Activated CD4-positive, alpha-beta memory T cell treated with anti-CD3 and anti-CD28 coated beads for 36 hours (primary cell): ENCODE measurements at regions of chr18 and their contacts with region 1.

Region 1: DNA sequence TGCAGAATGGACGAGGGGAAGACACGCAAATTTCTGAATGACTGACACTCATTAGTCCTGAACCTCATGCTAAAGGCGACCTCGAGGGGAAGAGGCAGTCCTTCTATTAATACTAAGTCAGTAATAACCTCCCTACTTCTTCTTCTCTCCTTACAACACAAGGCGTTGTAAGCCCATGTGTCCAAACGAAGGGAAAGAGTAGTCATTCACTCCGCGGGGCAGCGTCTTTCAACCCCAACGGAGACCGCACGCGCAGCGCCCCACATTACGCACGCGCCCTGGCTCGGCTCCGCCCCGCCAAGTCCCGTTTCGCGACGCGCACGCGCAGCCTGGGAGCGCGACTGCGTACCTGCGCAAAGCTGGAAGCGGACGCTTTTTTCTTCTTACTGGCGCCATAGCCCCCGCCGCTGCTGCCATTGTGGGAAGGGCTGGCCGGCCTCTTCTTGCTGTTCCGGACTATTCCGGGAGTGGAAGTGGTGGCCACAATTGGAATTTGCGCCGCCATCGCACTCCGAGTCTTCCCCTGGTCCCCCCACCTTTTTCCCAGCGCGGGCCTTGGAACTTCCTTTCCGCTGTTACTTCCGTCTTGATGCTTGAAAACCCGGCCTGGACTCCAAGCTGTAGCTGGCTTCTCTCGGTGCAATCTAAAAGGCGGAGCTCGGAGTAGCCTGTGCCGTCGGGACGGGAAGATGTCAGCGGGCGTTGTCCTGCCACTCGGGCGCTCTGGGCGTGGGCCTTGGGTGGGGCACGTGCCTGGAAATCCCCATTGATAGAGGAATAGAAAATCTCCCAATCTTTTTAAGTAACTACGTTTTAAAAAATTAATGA is at the start of gene INO80C:
- DNase-seq: peak; percentile 95
- H3K4me3 Mint-ChIP-seq: peak within 1 kb of the TSS; percentile 95
- H3K27ac Mint-ChIP-seq: peak within 1 kb of the TSS; percentile 98
- H3K4me1 Mint-ChIP-seq: peaks cover 26% of the 10 kb centered on the region
- H3K27me3 Mint-ChIP-seq: no peaks in the 10 kb centered on the region
- total RNA-seq, gene INO80C: 25.3 to 28.5 TPM

Region 2: GRCh38 chr18:34976899-34977837 is 520.4 kb before region 1 on chr18:
- CTCF ChIA-PET with region 1: no interaction called
- POLR2A ChIA-PET with region 1: no interaction called
- intact Hi-C with region 1: loop called (anchors 5 kb)
- DNase-seq: peak; percentile 78
- H3K4me3 Mint-ChIP-seq: peak overlapping the region; percentile 72
- H3K27ac Mint-ChIP-seq: no peak overlapping the region
- H3K4me1 Mint-ChIP-seq: peaks cover 23% of the 10 kb centered on the region
- H3K27me3 Mint-ChIP-seq: peaks cover 30% of the 10 kb centered on the region

Region 3: GRCh38 chr18:35343936-35344735 is 153.4 kb before region 1 on chr18 and contains the start of gene ZNF24:
- CTCF ChIA-PET with region 1: no interaction called
- POLR2A ChIA-PET with region 1: interaction called, 3 read pairs
- intact Hi-C with region 1: loop called (anchors 1 kb)
- DNase-seq: peak; percentile 95
- H3K4me3 Mint-ChIP-seq: peak within 1 kb of the TSS; percentile 87
- H3K27ac Mint-ChIP-seq: peak within 1 kb of the TSS; percentile 96
- H3K4me1 Mint-ChIP-seq: peaks cover 45% of the 10 kb centered on the region
- H3K27me3 Mint-ChIP-seq: no peaks in the 10 kb centered on the region
- total RNA-seq, gene ZNF24: 40.6 to 48.6 TPM

Region 4: DNA sequence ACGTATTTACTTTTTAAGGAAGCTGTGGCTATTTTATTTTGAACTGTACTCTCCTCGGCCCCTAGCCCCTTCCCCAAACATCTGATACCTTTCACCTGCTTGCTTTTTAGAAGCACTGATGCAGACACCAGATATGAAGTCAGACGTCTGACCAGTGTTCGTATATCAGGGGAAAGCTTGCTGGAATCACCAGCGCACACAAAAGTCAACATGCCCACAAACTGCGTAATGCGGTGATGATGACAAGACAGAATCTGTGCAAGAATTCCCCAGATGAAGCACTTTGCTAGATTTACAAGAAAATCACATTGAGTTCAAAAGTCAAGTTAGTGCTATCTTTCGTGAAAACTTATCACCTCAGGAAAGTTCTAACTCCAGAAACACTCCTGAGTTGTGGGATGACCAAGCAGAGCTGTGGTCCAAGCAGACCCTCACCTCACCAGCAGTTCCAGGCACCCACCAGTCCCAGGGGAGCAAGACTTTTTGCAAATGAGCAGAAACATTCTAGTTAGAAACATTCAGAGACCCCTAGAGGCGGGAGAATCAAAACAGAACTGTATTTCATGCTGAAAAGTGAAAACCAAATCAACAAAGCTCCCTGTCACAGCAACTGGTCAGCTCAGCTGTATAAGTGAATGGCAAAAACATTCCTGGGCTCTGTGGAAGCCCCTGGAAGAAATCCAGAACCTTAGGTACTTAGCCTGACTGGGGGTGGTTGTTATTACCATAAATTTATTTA is 55.6 kb before region 1 on chr18:
- CTCF ChIA-PET with region 1: no interaction called
- POLR2A ChIA-PET with region 1: no interaction called
- intact Hi-C with region 1: no loop called
- DNase-seq: no peak
- H3K4me3 Mint-ChIP-seq: no peak overlapping the region
- H3K27ac Mint-ChIP-seq: no peak overlapping the region
- H3K4me1 Mint-ChIP-seq: no peaks in the 10 kb centered on the region
- H3K27me3 Mint-ChIP-seq: peaks cover 9% of the 10 kb centered on the region

Region 5: DNA sequence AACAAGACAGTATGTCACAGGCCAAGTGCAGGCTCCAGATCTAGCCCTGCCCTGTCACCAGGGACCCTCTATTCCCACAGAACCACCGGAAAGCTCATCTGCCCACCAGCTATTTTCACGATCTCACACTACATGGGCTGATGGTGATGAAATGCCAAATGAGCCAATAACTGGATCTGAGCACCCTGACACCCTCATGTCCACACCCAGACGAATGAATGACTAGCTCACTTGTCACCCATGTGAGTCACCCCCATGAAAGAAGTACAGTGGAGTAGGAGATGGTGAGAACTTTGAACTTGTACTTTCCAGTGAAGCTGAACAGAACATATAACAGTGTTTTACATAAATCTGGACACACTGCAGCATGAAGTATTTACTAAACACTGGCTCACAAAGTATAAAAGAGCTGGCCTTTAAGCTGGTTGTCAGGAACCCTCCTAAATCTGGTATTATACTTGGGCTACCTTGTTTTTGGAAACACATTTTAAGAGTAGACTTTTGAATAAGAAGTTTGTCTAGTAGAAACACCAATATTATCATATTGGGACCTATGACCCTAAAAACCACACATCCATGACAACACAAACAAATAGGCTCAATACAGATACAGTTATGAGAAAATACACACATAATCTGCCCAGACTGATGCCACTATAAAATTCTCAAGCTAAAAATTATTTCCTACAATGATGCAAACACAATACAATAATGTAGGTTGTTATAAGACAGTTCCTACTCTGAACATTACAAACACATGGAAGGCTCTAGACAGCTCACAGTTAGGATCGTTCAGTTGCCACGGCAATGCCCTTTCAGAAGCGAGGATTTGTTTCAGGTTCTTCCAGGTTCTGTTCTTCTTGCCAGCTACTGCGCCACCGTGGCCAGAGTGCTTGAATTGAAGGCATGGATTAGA is 18.8 kb before region 1 on chr18:
- CTCF ChIA-PET with region 1: interaction called, 11 read pairs
- POLR2A ChIA-PET with region 1: interaction called, 16 read pairs
- intact Hi-C with region 1: loop called (anchors 1 kb)
- DNase-seq: peak; percentile 65
- H3K4me3 Mint-ChIP-seq: peak overlapping the region; percentile 8
- H3K27ac Mint-ChIP-seq: peak overlapping the region; percentile 39
- H3K4me1 Mint-ChIP-seq: peaks cover 34% of the 10 kb centered on the region
- H3K27me3 Mint-ChIP-seq: no peaks in the 10 kb centered on the region

Region 6: GRCh38 chr18:35580701-35581539 is 83.3 kb after region 1 on chr18:
- CTCF ChIA-PET with region 1: no interaction called
- POLR2A ChIA-PET with region 1: interaction called, 5 read pairs
- intact Hi-C with region 1: loop called (anchors 1 kb)
- DNase-seq: peak; percentile 61
- H3K4me3 Mint-ChIP-seq: peak overlapping the region; percentile 68
- H3K27ac Mint-ChIP-seq: peak overlapping the region; percentile 53
- H3K4me1 Mint-ChIP-seq: peaks cover 34% of the 10 kb centered on the region
- H3K27me3 Mint-ChIP-seq: peaks cover 25% of the 10 kb centered on the region

Region 7: GRCh38 chr18:35972197-35973052 is 474.8 kb after region 1 on chr18 and contains the start of gene RMP24:
- CTCF ChIA-PET with region 1: no interaction called
- POLR2A ChIA-PET with region 1: interaction called, 5 read pairs
- intact Hi-C with region 1: loop called (anchors 1 kb)
- DNase-seq: peak; percentile 97
- H3K4me3 Mint-ChIP-seq: peak within 1 kb of the TSS; percentile 95
- H3K27ac Mint-ChIP-seq: peak within 1 kb of the TSS; percentile 98
- H3K4me1 Mint-ChIP-seq: peaks cover 50% of the 10 kb centered on the region
- H3K27me3 Mint-ChIP-seq: no peaks in the 10 kb centered on the region

Region 8: DNA sequence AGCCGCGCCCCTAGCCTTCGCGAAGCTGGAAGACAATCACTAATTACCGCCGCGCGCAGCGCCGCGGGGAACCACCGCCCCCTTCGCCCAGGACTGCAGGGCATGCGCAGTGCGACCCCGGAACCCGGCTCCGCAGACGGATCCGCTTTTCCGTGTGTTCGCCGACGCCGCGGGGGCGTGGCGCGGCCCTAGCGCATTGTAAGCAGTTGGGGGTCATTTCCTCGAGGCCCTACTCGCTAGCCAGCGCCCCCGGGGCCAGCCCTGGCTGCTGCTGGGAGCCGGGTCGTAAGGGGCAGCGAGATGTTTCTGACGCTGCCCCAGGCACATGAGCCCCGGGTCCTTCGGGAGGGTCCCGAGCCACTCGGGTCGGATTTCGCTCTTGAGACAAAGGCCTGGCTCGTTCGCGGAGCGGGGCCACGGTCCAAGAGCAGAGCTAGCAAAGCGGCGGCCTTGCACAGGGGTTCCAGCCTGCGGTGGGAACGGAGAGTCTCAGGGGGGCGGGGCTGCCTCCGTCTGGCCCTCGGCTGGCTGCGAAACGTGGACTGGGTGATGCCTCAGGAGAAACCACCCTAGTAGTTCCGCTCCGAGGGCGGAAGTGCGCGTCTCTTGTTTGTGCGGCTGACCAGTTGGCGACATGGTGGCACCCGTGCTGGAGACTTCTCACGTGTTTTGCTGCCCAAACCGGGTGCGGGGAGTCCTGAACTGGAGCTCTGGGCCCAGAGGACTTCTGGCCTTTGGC is 631.9 kb after region 1 on chr18 and contains the starts of genes ELP2 and SLC39A6:
- CTCF ChIA-PET with region 1: no interaction called
- POLR2A ChIA-PET with region 1: no interaction called
- intact Hi-C with region 1: loop called (anchors 2 kb)
- DNase-seq: peak; percentile 95
- H3K4me3 Mint-ChIP-seq: peak within 1 kb of the TSS; percentile 94
- H3K27ac Mint-ChIP-seq: peak within 1 kb of the TSS; percentile 95
- H3K4me1 Mint-ChIP-seq: peaks cover 60% of the 10 kb centered on the region
- H3K27me3 Mint-ChIP-seq: no peaks in the 10 kb centered on the region
- total RNA-seq, gene ELP2: 83.7 to 84.4 TPM
- total RNA-seq, gene SLC39A6: 23.7 to 24.3 TPM